ENCODE measurements at regions of chr4 and their contacts with region 1.

Region 1: GRCh38 chr4:151015459-151016347 is 619 bp upstream of the LRBA start:
- DNase-seq: peak; percentile 81
- H3K4me3 Mint-ChIP-seq: peak overlapping the region; percentile 99
- H3K27ac Mint-ChIP-seq: peak overlapping the region; percentile 83
- H3K4me1 Mint-ChIP-seq: peaks cover 13% of the 10 kb centered on the region
- H3K27me3 Mint-ChIP-seq: no peaks in the 10 kb centered on the region
- CTCF ChIP-seq: no peak

Region 2: DNA sequence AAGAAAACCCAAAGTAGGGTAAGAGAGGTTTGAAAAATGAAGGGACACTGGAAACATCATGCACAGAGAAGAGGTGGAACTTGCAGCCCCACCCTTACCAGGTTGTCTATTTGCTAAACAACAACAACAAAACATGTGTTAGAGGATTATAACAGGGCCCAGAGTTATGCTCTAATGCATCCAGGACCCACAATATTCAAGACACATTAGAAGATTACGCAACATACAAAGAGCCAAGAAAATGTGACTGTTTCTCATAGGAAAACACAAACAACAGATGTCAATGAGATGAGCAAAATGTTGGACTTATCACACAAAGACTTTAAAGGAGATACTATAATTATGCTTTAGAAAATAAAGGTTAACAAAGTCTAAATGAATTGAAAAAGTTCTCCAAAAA is 129.1 kb before region 1 on chr4:
- CTCF ChIA-PET with region 1: no interaction called
- POLR2A ChIA-PET with region 1: interaction called, 5 read pairs
- intact Hi-C with region 1: loop called (anchors 10 kb)
- DNase-seq: peak; percentile 21
- H3K4me3 Mint-ChIP-seq: no peak overlapping the region
- H3K27ac Mint-ChIP-seq: no peak overlapping the region
- H3K4me1 Mint-ChIP-seq: peaks cover 23% of the 10 kb centered on the region
- H3K27me3 Mint-ChIP-seq: no peaks in the 10 kb centered on the region
- CTCF ChIP-seq: no peak

Region 3: GRCh38 chr4:150970685-150971151 is 45.0 kb before region 1 on chr4:
- CTCF ChIA-PET with region 1: interaction called, 4 read pairs
- POLR2A ChIA-PET with region 1: interaction called, 12 read pairs
- intact Hi-C with region 1: no loop called
- DNase-seq: no peak
- H3K4me3 Mint-ChIP-seq: no peak overlapping the region
- H3K27ac Mint-ChIP-seq: no peak overlapping the region
- H3K4me1 Mint-ChIP-seq: no peaks in the 10 kb centered on the region
- H3K27me3 Mint-ChIP-seq: no peaks in the 10 kb centered on the region
- CTCF ChIP-seq: no peak

Region 4: DNA sequence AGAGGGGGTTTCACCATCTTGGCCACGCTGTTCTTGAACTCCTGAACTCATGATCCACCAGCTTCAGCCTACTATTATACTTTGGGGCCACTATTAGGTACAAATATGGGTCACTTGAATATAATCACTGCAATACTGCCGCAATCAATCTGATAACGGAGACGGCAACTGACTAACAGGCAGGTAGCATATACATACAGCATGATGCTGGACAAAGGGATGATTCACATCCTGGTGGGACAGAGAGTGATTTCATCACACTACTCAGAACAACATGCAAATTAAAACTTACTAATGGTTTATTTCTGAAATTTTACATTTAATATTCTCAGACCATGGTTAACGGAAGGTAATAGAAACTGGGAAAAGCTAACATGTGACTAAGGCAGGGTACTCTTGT is 11.5 kb before region 1 on chr4:
- CTCF ChIA-PET with region 1: interaction called, 3 read pairs
- POLR2A ChIA-PET with region 1: interaction called, 13 read pairs
- intact Hi-C with region 1: no loop called
- DNase-seq: peak; percentile 79
- H3K4me3 Mint-ChIP-seq: no peak overlapping the region
- H3K27ac Mint-ChIP-seq: peak overlapping the region; percentile 65
- H3K4me1 Mint-ChIP-seq: peaks cover 15% of the 10 kb centered on the region
- H3K27me3 Mint-ChIP-seq: no peaks in the 10 kb centered on the region
- CTCF ChIP-seq: no peak

Region 5: GRCh38 chr4:151099229-151099975 is 83.7 kb after region 1 on chr4 and contains the start of gene RPS3A:
- CTCF ChIA-PET with region 1: interaction called, 4 read pairs
- POLR2A ChIA-PET with region 1: interaction called, 84 read pairs
- intact Hi-C with region 1: loop called (anchors 1 kb)
- DNase-seq: peak; percentile 98
- H3K4me3 Mint-ChIP-seq: peak within 1 kb of the TSS; percentile 91
- H3K27ac Mint-ChIP-seq: peak within 1 kb of the TSS; percentile 100
- H3K4me1 Mint-ChIP-seq: peaks cover 10% of the 10 kb centered on the region
- H3K27me3 Mint-ChIP-seq: no peaks in the 10 kb centered on the region
- CTCF ChIP-seq: peak; percentile 78
- total RNA-seq, gene RPS3A: 2,661 and 2,955 TPM in 2 replicates

Region 6: DNA sequence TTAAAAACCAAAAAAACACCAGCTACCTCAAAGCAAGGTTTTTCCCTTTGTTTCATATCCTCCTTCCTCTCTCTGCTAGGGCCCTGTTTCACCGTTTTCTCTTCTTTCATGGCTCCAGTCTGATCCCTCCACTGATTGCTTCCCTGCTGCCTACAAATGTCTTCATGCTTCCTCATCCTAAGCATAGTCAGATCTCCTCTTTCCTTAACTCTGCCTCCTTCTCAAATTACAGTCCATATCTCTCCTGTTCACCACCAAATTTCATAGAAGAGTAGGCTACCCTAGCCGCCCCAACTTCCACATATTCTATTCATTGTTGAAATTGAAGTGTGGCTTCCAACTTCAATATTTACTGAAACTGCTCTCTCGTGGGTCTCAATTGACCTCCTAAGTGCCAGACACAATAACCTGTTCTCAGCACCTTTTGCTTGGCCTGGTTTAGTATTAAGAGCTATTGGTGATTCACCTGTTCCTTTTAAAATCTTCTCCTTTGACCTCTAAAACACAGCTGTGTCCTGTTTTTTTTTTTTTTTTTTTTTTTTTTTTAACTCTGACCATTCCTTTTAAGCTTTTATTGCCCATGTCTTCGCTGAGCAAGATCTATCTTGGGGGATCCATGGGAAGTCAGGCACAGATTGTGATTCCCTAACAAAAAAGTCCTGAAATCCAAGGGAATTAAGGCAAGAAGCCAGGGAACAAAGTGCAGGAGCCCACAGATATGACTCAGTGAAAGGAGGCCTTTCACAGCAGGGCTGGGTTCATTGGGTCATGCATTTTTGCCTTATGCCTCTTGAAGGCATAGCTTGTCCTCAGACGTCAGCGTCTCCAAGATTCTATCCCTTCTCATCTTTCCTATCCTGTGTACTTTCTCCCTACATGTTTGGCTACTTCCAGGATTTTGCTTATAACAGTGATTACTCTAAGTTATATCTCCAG is 169.1 kb after region 1 on chr4:
- CTCF ChIA-PET with region 1: no interaction called
- POLR2A ChIA-PET with region 1: no interaction called
- intact Hi-C with region 1: no loop called
- DNase-seq: peak; percentile 24
- H3K4me3 Mint-ChIP-seq: no peak overlapping the region
- H3K27ac Mint-ChIP-seq: no peak overlapping the region
- H3K4me1 Mint-ChIP-seq: no peaks in the 10 kb centered on the region
- H3K27me3 Mint-ChIP-seq: no peaks in the 10 kb centered on the region
- CTCF ChIP-seq: no peak

Region 7: GRCh38 chr4:151291485-151291884 is 275.8 kb after region 1 on chr4:
- CTCF ChIA-PET with region 1: no interaction called
- POLR2A ChIA-PET with region 1: no interaction called
- intact Hi-C with region 1: no loop called
- DNase-seq: no peak
- H3K4me3 Mint-ChIP-seq: no peak overlapping the region
- H3K27ac Mint-ChIP-seq: no peak overlapping the region
- H3K4me1 Mint-ChIP-seq: peaks cover 10% of the 10 kb centered on the region
- H3K27me3 Mint-ChIP-seq: no peaks in the 10 kb centered on the region
- CTCF ChIP-seq: no peak